Endothelial cell of umbilical vein (primary cell): ENCODE measurements at regions of chr2 and their contacts with region 1.

Region 1: GRCh38 chr2:138209009-138209408 is 244.7 kb downstream of the HNMT start:
- DNase-seq: peak; percentile 69
- H3K4me3 ChIP-seq: no peak overlapping the region
- H3K27ac ChIP-seq: peak overlapping the region; percentile 26
- H3K4me1 ChIP-seq: peaks cover 11% of the 10 kb centered on the region
- H3K27me3 ChIP-seq: no peaks in the 10 kb centered on the region
- CTCF ChIP-seq: no peak
- POLR2A ChIP-seq: no peak

Region 2: DNA sequence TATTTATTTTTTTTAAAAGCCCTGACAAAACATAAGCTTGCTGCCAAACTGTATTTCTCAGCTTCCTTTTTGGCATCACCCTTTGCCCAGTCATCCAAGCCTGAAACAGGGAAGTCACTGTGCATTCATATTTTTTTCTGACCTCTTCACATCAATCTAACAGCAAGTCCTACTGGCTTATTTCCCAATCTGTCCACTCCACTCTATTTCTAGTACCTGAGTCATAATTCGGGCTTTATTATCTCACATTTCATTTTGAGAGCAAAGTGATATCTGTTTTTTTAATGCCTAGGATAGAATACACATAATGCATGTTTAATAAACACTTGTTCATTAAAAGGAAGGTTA is 239.6 kb before region 1 on chr2:
- CTCF ChIA-PET with region 1: no interaction called
- POLR2A ChIA-PET with region 1: no interaction called
- dilution Hi-C with region 1: no loop called
- intact Hi-C with region 1: loop called (anchors 2 kb)
- DNase-seq: peak; percentile 98
- H3K4me3 ChIP-seq: no peak overlapping the region
- H3K27ac ChIP-seq: peak overlapping the region; percentile 74
- H3K4me1 ChIP-seq: peaks cover 35% of the 10 kb centered on the region
- H3K27me3 ChIP-seq: no peaks in the 10 kb centered on the region
- CTCF ChIP-seq: no peak
- POLR2A ChIP-seq: no peak

Region 3: DNA sequence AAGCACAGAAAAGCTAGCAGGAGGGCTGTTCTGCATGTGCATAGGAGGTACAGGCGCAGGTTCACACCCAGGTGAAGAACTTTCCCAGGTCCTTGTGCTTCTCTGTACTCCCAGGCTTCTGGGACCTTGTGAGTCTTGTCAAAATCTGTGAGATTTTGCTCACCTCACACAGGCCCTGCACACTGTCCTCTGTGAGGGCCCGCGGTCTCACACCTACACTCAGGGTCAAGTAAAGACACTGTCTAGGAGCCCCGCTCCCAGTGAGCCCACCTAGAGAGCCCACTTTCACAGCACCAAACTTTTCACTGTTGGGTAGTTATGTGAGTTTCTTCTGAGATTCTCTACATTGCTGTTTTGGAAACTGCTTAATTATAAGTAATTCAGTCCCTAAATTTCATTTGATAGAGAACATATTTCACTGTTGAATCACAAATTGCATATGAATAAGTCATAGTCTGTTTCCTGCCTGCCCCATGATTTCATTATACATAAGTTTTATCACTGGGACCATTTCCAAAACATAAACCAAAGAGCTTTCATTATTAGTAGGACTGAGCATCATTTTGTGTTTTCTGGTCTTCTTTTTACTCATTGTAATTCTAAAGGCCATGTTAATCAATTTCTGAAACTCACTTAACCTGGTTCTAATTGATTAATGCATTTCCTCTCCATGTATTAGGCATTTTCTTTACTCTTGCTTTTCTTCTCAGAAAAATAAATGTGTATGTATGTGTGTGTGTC is 58.3 kb after region 1 on chr2:
- CTCF ChIA-PET with region 1: no interaction called
- POLR2A ChIA-PET with region 1: no interaction called
- dilution Hi-C with region 1: no loop called
- intact Hi-C with region 1: loop called (anchors 2 kb)
- DNase-seq: peak; percentile 79
- H3K4me3 ChIP-seq: peak overlapping the region in 1 of 3 experiments; percentile 22
- H3K27ac ChIP-seq: peak overlapping the region; percentile 97
- H3K4me1 ChIP-seq: peaks cover 23% of the 10 kb centered on the region
- H3K27me3 ChIP-seq: no peaks in the 10 kb centered on the region
- CTCF ChIP-seq: no peak
- POLR2A ChIP-seq: no peak

Region 4: GRCh38 chr2:138335036-138335435 is 126.0 kb after region 1 on chr2:
- CTCF ChIA-PET with region 1: no interaction called
- POLR2A ChIA-PET with region 1: no interaction called
- dilution Hi-C with region 1: no loop called
- intact Hi-C with region 1: no loop called
- DNase-seq: no peak
- H3K4me3 ChIP-seq: no peak overlapping the region
- H3K27ac ChIP-seq: no peak overlapping the region
- H3K4me1 ChIP-seq: no peaks in the 10 kb centered on the region
- H3K27me3 ChIP-seq: no peaks in the 10 kb centered on the region
- CTCF ChIP-seq: no peak
- POLR2A ChIP-seq: no peak